Activated CD4-positive, alpha-beta memory T cell treated with anti-CD3 and anti-CD28 coated beads, Interleukin-2, amount 10 ng/mL, durations not matched to agents 7 days and 5 days (primary cell): ENCODE measurements at regions of chr14 and their contacts with region 1.

Region 1: GRCh38 chr14:20873370-20874177 is 17.6 kb upstream of the RNASE3 start:
- DNase-seq: peak; percentile 82
- H3K4me3 Mint-ChIP-seq: no peak overlapping the region
- H3K27ac Mint-ChIP-seq: no peak overlapping the region
- H3K4me1 Mint-ChIP-seq: peaks cover 19% of the 10 kb centered on the region
- H3K27me3 Mint-ChIP-seq: peaks cover 25% of the 10 kb centered on the region

Region 2: GRCh38 chr14:20697273-20698017 is 176.1 kb before region 1 on chr14:
- CTCF ChIA-PET with region 1: interaction called, 13 read pairs
- POLR2A ChIA-PET with region 1: no interaction called
- DNase-seq: peak; percentile 74
- H3K4me3 Mint-ChIP-seq: no peak overlapping the region
- H3K27ac Mint-ChIP-seq: no peak overlapping the region
- H3K4me1 Mint-ChIP-seq: peaks cover 18% of the 10 kb centered on the region
- H3K27me3 Mint-ChIP-seq: peaks cover 1% of the 10 kb centered on the region